Activated CD4-positive, alpha-beta memory T cell treated with anti-CD3 and anti-CD28 coated beads for 36 hours (primary cell): ENCODE measurements at regions of chr9 and their contacts with region 1.

Region 1: GRCh38 chr9:76419782-76420380 is 25.7 kb upstream of the RFK start:
- DNase-seq: no peak
- H3K4me3 Mint-ChIP-seq: no peak overlapping the region
- H3K27ac Mint-ChIP-seq: no peak overlapping the region
- H3K4me1 Mint-ChIP-seq: peaks cover 34% of the 10 kb centered on the region
- H3K27me3 Mint-ChIP-seq: no peaks in the 10 kb centered on the region

Region 2: GRCh38 chr9:76405868-76406267 is 14.0 kb before region 1 on chr9:
- CTCF ChIA-PET with region 1: interaction called, 13 read pairs
- POLR2A ChIA-PET with region 1: no interaction called
- intact Hi-C with region 1: no loop called
- DNase-seq: no peak
- H3K4me3 Mint-ChIP-seq: no peak overlapping the region
- H3K27ac Mint-ChIP-seq: no peak overlapping the region
- H3K4me1 Mint-ChIP-seq: peaks cover 13% of the 10 kb centered on the region
- H3K27me3 Mint-ChIP-seq: no peaks in the 10 kb centered on the region

Region 3: GRCh38 chr9:76502746-76503145 is 82.9 kb after region 1 on chr9:
- CTCF ChIA-PET with region 1: no interaction called
- POLR2A ChIA-PET with region 1: no interaction called
- intact Hi-C with region 1: no loop called
- DNase-seq: no peak
- H3K4me3 Mint-ChIP-seq: no peak overlapping the region
- H3K27ac Mint-ChIP-seq: no peak overlapping the region
- H3K4me1 Mint-ChIP-seq: no peaks in the 10 kb centered on the region
- H3K27me3 Mint-ChIP-seq: no peaks in the 10 kb centered on the region